ENCODE measurements at regions of chr12 and their contacts with region 1.

Region 1: DNA sequence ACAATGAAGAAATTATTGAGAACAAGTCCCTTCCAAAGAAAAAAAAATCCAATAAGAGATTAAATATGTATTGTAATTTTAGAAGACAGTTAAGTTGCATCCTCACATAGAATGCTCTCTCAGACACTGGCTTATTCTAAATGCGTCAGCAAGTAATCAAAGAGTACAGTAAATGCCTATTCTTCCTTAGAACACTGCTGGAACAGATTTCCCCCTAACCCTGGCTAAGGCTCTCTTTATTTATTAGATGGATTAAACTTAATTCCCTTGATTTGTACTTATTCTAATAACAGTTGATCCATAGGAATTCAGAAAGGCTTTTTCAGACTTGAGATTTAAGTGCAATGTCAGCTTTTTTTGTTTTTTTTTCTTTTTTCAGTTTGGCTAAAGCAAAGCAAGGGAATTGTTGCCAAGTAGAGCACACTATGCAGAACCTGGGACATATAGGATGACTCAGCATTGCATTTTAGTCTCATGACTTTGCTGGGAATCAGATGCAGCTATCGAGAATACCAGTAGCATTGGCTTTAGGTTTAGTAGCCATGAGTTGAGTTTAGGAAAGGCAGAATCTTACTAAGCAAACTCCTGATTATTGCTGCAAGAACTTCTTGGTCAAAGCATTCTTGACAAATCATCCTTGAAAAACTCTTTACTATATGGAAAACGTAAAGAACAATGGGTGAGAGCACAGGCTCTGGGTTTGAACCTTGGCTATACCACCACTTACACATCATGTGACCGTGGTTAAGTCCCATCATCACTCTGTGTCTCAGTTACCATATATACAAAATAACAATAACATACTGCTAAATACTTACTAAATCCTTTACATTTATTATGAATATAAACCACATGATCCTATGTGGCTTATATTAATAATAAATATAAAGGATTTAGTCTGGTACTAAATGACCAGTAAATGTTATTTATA is 26.7 kb downstream of the MED21 start:
- DNase-seq: peak; percentile 32
- H3K4me3 ChIP-seq: no peak overlapping the region
- CTCF ChIP-seq: no peak

Region 2: DNA sequence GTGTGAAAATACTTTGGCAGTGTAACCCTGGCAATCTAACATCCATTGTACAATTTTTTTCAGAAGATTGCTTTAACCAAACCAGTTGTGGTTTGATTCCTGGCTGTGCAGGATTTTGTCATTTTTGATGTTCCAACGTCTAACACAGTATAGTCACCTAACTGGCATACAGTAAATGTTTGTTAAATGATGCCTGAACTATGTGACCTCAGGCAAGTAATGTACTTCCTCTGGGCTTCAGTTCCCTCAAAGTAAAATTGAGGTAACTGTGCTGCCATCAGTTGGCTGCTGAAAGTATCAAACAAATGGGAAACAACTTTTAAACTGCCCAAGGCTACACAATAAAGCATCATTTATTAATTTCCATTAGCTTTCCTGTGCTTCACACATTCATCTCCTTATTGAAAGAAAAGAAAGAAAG is 39.2 kb before region 1 on chr12:
- in situ Hi-C with region 1: no loop called
- DNase-seq: no peak
- H3K4me3 ChIP-seq: no peak overlapping the region
- CTCF ChIP-seq: no peak

Region 3: DNA sequence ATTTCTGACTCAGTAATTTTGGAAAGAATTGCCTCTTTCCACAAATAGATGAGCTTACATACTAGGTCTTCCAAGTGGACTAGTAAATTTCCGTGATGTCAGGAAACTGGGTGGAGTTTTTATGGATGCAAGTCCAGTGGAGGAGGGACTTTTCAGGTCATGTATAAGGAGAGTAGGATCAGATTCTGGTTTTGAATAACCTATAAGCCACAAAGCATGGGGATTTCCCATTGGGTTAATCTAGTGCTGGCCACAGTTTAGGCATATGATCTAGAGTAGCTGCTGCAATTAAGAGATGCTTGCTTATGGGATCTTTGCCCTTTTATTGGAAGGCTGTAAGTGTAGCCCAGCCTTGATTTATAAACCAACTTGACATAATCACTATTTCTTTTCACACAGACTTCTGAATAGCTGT is 228.8 kb after region 1 on chr12:
- in situ Hi-C with region 1: loop called (anchors 25 kb)
- DNase-seq: peak; percentile 57
- H3K4me3 ChIP-seq: no peak overlapping the region
- CTCF ChIP-seq: no peak

Region 4: DNA sequence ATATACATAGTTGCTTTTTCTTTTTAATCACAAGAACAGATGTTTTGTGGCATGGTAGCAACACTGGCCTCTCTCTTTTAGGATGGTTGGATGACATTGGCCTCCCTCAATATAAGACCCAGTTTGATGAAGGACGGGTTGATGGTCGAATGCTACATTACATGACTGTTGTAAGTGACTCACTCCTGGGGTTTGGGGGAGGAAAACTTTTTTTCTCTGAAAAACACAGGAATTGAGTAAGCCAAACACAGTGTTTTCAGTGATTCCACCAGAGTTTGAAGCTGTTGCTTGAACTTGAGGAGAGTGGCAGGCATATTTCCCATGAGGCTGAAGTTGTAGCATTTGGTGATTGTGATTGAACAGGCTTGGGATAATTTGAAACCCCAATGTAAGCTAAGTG is 633.4 kb after region 1 on chr12:
- in situ Hi-C with region 1: no loop called
- DNase-seq: no peak
- H3K4me3 ChIP-seq: no peak overlapping the region
- CTCF ChIP-seq: no peak

Measured in astrocyte of the cerebellum (primary cell).